Posterior cingulate gyrus (tissue), 11 donors: ENCODE measurements at regions of chr1 and their contacts with region 1.

Region 1: GRCh38 chr1:156500797-156501499 is 373 bp upstream of the MEF2D start:
- DNase-seq: peak; percentile 90 to 99 (median 94)

Region 2: DNA sequence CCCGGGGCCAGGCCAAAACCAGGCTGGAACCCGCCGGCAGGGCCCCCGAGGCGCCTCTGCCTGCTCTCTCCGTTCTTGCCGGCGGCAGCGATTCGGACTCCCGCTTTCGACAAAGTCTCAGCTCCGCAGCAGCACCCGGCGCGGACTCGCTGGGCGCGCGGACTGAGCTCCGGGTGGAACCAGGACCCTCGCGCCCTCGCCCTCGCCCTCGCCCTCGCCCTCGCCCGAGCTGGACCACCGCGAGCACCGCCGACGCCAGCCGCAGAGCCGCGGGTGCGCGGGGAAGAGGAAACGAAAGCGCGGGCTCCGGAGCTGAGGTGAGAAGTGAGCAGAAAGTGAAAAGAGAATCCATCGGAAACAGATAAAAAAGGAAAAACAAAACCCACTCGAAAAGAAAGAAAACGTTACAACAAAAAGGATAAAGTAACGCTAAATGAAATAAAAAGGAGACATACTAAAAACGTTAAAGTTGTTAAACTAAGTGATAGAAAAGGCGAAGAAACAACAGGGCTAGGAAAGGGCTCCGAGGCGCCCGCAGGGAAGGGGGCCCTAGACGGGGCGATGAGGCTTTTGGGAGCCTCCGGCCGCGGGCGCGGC is 65.3 kb before region 1 on chr1:
- intact Hi-C with region 1: no loop called
- DNase-seq: peak in 2 of 10 donors; percentile 88 to 89

Region 3: GRCh38 chr1:156456622-156457465 is 44.1 kb before region 1 on chr1:
- intact Hi-C with region 1: loop called (anchors 2 kb)
- DNase-seq: peak; percentile 93 to 99 (median 95)

Region 4: DNA sequence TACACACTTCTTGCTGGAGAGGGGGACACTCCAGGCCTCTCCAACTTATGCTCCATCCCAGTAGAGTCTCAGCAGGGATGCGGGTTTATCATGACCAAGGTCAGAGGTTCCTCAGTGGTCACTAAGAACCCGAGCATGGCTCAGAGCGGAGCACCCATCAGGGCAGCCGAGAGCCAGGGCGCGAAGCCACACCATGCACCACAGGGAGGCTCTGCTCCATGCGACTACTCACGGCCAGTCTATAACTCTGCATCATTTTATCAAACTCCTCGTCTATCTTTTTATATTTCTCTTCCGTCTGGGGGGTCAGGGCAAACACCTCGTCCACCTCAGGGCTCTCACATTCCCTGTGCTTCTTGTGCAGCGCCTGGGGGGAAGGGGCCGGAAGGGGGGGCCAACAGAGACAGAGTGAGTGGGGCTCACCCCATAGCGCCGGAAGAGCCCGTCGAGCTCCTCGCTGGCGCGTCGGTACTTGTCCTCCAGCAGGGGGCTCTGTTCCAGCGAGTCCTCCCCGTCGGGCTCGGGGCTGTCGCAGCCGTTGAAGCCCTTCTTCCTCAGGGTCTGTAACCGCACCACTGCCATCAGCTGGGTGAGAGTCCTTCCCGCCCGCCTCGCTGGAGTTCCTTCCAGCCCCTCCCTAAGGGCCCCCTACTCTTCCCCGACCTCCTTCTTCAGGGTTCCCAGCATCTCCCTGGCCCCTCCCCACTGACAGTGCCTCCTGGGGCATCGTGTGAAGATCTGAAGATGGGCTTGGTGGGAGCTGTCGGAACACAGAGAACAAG is 20.3 kb before region 1 on chr1:
- intact Hi-C with region 1: loop called (anchors 2 kb)
- DNase-seq: peak in 4 of 10 donors; percentile 65 to 93 (median 84)

Region 5: GRCh38 chr1:156524481-156524869 is 23.5 kb after region 1 on chr1:
- intact Hi-C with region 1: no loop called
- DNase-seq: no peak

Region 6: GRCh38 chr1:156591432-156592157 is 90.6 kb after region 1 on chr1 and contains the start of gene NAXE:
- intact Hi-C with region 1: loop called (anchors 5 kb)
- DNase-seq: peak; percentile 66 to 97 (median 78)